BJ (cell line): ENCODE measurements at regions of chr9 and their contacts with region 1.

Region 1: DNA sequence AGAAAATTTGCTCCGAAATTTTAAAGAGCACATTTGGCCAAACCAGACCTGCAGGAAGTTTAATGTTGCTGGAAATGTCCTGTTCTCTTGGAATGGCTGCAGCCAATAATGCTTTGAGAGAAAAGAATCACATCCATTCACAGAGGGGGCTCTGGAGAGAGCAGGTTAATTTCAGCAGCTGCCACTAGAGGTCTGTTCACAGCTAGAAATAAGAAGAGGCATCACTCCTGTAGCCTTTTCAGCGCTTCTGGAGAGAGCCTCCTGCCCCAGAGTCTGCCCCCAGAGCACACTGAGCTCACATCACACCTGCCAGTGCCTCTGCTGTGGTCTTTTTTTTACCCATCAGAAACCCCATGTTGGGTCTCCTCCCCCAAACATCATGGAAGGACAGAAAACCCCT is 124.8 kb upstream of the RAD23B start:
- DNase-seq: no peak
- H3K4me3 ChIP-seq: no peak overlapping the region
- H3K27me3 ChIP-seq: no peaks in the 10 kb centered on the region
- CTCF ChIP-seq: peak; percentile 64

Region 2: GRCh38 chr9:107172160-107172978 is 14.0 kb after region 1 on chr9:
- CTCF ChIA-PET with region 1: interaction called, 16 read pairs
- POLR2A ChIA-PET with region 1: no interaction called
- DNase-seq: peak; percentile 29
- H3K4me3 ChIP-seq: no peak overlapping the region
- H3K27me3 ChIP-seq: no peaks in the 10 kb centered on the region; the same call in 1 of the 2 replicates
- CTCF ChIP-seq: peak; percentile 89